ENCODE measurements at regions of chr4 and their contacts with region 1.

Region 1: GRCh38 chr4:108030332-108030731 is 40.6 kb downstream of the HADH start:
- DNase-seq: peak; percentile 40 to 69 (median 43)
- ATAC-seq: peak; percentile 97
- H3K4me3 ChIP-seq: no peak overlapping the region
- H3K27ac ChIP-seq: no peak overlapping the region
- H3K4me1 ChIP-seq: no peaks in the 10 kb centered on the region
- H3K27me3 ChIP-seq: no peaks in the 10 kb centered on the region
- CTCF ChIP-seq: peak; percentile 66 to 70 (median 67)
- EP300 ChIP-seq: no peak
- POLR2A ChIP-seq: no peak
- RAD21 ChIP-seq: peak in 1 of 2 experiments; percentile 72; a peak in 2 of 4 replicates

Region 2: GRCh38 chr4:108060164-108060563 is 29.8 kb after region 1 on chr4:
- CTCF ChIA-PET with region 1: no interaction called
- POLR2A ChIA-PET with region 1: no interaction called
- in situ Hi-C with region 1: no loop called
- intact Hi-C with region 1: loop called (anchors 2 kb)
- DNase-seq: peak in 2 of 4 experiments; percentile 35 to 39
- ATAC-seq: peak; percentile 60
- H3K4me3 ChIP-seq: no peak overlapping the region
- H3K27ac ChIP-seq: no peak overlapping the region
- H3K4me1 ChIP-seq: no peaks in the 10 kb centered on the region
- H3K27me3 ChIP-seq: no peaks in the 10 kb centered on the region
- CTCF ChIP-seq: peak; percentile 9 to 54 (median 46); a peak in 5 of 6 replicates
- EP300 ChIP-seq: no peak
- POLR2A ChIP-seq: no peak
- RAD21 ChIP-seq: peak; percentile 53 to 62

Region 3: GRCh38 chr4:108181704-108182103 is 151.4 kb after region 1 on chr4:
- CTCF ChIA-PET with region 1: interaction called, 3 read pairs
- POLR2A ChIA-PET with region 1: no interaction called
- in situ Hi-C with region 1: no loop called
- intact Hi-C with region 1: loop called (anchors 2 kb)
- DNase-seq: peak; percentile 31 to 52 (median 36)
- ATAC-seq: peak; percentile 98
- H3K4me3 ChIP-seq: no peak overlapping the region
- H3K27ac ChIP-seq: no peak overlapping the region
- H3K4me1 ChIP-seq: no peaks in the 10 kb centered on the region
- H3K27me3 ChIP-seq: no peaks in the 10 kb centered on the region
- CTCF ChIP-seq: peak; percentile 44 to 76 (median 64); a peak in 4 of 6 replicates
- EP300 ChIP-seq: no peak
- POLR2A ChIP-seq: no peak
- RAD21 ChIP-seq: peak; percentile 25 to 60; a peak in 3 of 4 replicates

Region 4: GRCh38 chr4:108512615-108513505 is 482.5 kb after region 1 on chr4:
- CTCF ChIA-PET with region 1: no interaction called
- POLR2A ChIA-PET with region 1: interaction called, 3 read pairs
- in situ Hi-C with region 1: no loop called
- intact Hi-C with region 1: loop called (anchors 5 kb)
- DNase-seq: peak; percentile 26 to 74 (median 40)
- ATAC-seq: peak; percentile 93
- H3K4me3 ChIP-seq: no peak overlapping the region
- H3K27ac ChIP-seq: no peak overlapping the region
- H3K4me1 ChIP-seq: no peaks in the 10 kb centered on the region; a peak in 1 of 5 replicates
- H3K27me3 ChIP-seq: peaks cover 0 to 18% of the 10 kb centered on the region in 2 experiments; a peak in 4 of 5 replicates
- CTCF ChIP-seq: peak; percentile 55 to 59 (median 58); a peak in 5 of 6 replicates
- EP300 ChIP-seq: no peak
- POLR2A ChIP-seq: no peak
- RAD21 ChIP-seq: peak; percentile 66 to 73